ENCODE measurements at regions of chr14 and their contacts with region 1.

Region 1: DNA sequence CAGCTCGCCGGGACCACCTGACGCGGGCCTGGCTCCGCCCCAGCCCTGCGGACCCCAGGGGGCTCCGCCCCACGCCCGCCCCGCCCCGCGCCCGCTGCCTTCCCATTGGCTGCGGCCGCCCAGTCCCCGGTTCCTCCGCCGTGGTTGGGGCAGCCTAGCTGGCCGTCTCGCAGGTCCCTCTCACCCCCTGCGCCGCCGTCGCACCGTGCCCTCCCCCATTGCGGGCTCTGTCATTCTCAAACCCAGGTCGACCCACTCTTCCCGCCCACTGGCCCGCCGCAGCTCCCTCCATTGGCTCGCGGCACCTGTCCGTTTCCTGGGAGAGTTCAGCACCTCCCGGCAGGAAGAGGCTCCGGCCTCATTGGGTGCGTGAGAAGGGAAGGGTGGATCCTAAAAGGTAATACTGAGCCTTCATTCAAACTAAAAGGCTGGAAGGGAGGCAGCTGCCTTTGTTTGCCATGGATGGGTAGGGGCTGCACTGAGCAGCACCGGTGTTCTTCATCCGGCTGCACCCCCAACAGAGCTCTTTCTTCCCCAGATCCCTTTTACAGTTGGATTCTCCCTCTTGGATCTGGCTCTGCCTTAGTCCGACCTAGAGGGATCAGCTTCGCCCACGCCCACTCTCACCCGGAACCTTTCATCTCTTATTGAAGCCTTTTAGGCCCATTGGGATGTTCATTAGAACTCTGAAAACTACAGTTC is 381 bp upstream of the MAP3K9 start:
- DNase-seq: peak; percentile 97 to 99 (median 98)
- ATAC-seq: peak; percentile 94 to 97 (median 94)
- H3K4me3 ChIP-seq: peak overlapping the region; percentile 88 to 98 (median 92)
- H3K27ac ChIP-seq: peak overlapping the region in 3 of 4 donors; percentile 79 to 82 (median 79)
- H3K4me1 ChIP-seq: peaks cover 0 to 6% (median 0%) of the 10 kb centered on the region in 3 donors
- H3K27me3 ChIP-seq: no peaks in the 10 kb centered on the region
- CTCF ChIP-seq: no peak

Region 2: DNA sequence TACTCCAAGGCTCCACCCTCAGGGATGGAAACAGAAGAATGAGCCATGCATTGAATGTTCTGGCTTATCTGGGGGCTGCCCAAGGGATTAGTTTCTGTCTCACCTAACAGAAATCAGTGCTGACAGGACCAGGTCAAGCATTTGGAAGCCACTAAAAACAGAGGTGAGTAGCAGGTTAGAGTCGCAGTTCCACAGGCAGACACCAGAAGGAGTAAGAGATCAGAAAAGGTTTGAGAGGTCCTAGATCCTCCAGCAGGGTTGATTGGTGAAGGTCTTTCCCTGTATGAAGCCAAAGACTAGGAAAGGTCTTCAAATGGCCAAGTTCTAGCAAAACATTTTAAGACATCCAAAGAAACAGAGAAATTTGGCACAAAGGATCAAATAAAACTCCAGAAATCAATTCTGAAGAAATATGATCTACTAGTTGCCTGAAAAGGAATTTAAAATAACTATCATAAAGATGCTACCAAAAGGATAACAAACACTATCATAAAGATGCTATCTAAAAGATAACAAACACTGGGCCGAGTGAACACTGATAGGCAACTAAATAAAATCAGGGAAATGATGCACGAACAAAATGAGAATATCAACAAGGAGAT is 187.5 kb before region 1 on chr14:
- intact Hi-C with region 1: loop called in 1 of 3 experiments (anchors 10 kb)
- DNase-seq: peak in 3 of 6 donors; percentile 18 to 62 (median 22)
- ATAC-seq: peak in 3 of 4 donors; percentile 90 to 96 (median 90)
- H3K4me3 ChIP-seq: no peak overlapping the region
- H3K27ac ChIP-seq: no peak overlapping the region
- H3K4me1 ChIP-seq: no peaks in the 10 kb centered on the region
- H3K27me3 ChIP-seq: no peaks in the 10 kb centered on the region
- CTCF ChIP-seq: peak in 3 of 4 donors; percentile 48 to 58 (median 49)

Region 3: DNA sequence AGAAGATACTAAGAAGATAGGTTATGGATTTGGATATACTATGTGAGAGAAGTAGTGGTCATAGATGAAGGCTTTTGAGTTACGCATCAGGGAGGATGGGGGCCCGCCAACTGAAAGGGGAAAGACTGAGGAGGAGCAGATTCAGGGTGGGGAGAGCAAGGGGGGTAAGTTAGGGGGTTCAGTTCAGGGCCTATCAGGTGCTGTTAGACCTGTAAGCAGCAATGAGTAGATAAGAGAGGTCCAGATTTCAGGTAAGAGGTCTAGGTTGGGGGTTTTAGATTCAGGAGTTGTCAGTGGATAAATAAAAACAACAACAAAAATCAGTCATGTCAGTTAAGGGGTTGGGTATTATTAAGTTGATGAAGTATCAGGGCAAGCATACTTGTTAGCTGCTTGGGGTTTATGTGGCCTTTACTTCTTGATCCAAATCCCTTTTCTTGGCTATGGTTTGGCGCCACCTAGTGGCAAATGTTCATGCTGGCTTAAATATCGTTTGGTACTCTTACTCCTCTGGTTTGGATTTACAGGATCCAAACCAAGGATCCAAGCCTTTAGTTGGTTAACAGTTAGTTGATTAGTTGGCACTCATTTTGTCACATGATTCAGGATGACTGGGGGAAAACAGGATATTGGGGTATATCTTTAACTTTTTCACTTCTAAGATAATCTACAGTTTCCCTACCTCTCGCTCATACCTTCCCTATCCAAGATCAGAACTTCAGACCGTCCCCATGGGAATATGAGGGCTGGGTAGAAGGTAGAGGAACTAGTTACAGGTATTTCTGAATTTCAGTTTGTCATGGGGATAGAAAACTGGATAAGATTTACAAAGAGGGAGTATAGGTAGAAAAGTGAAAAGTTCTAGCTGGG is 162.6 kb after region 1 on chr14:
- intact Hi-C with region 1: loop called in 2 of 3 experiments (anchors 10 kb)
- DNase-seq: peak; percentile 63 to 86 (median 74)
- ATAC-seq: peak; percentile 91 to 99 (median 96)
- H3K4me3 ChIP-seq: no peak overlapping the region
- H3K27ac ChIP-seq: no peak overlapping the region
- H3K4me1 ChIP-seq: no peaks in the 10 kb centered on the region
- H3K27me3 ChIP-seq: no peaks in the 10 kb centered on the region
- CTCF ChIP-seq: peak; percentile 85 to 95 (median 93)

Measured in pancreas (tissue), 10 donors.